IMR-90 (cell line): ENCODE measurements at regions of chr1 and their contacts with region 1.

Region 1: GRCh38 chr1:6906783-6907182 is 121.5 kb downstream of the CAMTA1 start:
- DNase-seq: no peak
- ATAC-seq: no peak
- H3K4me3 ChIP-seq: no peak overlapping the region
- H3K27ac ChIP-seq: no peak overlapping the region
- H3K4me1 ChIP-seq: no peaks in the 10 kb centered on the region
- H3K27me3 ChIP-seq: peaks cover 1% of the 10 kb centered on the region; the same call in 1 of the 2 replicates
- CTCF ChIP-seq: no peak
- POLR2A ChIP-seq: no peak
- RAD21 ChIP-seq: no peak

Region 2: DNA sequence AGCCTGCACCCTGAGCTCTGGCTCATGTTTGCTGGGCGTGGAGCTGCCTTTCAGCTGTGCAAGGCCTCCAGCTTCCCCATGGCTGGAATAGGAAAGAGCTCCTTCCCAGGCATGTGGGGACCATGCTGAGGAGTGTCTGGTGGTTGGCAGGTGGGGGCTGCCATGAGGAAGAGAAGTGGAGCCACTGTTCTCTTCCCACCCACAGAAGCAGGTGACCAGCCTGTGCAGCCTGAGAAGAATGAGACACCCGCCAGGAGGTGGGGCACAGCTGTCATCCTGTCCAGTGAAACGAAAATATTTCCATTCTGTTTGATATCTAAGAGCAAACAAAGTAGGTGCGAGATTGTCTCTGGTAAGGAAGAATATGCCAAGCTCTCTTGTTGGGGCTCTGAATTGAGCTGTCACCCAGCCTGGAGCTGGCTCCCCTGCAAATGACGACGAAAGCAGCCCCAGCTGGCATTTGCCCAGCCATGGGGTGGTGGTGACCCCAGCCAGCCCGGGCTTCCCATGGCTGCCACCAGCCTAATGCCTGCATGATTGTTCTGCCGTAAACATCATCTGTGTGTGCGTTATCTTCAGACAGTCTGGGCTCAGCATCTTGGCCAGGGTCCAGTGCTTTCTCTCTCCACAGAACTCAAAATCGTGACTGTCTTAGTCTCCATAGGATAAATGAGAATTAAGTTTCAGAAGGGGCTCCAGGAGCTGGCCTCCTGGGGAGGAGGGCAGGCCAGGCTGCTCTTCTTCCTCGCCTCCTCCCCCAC is 434.5 kb after region 1 on chr1:
- CTCF ChIA-PET with region 1: no interaction called
- POLR2A ChIA-PET with region 1: no interaction called
- dilution Hi-C with region 1: no loop called
- in situ Hi-C with region 1: no loop called
- intact Hi-C with region 1: loop called (anchors 10 kb)
- DNase-seq: peak; percentile 77
- ATAC-seq: peak; percentile 78
- H3K4me3 ChIP-seq: no peak overlapping the region
- H3K27ac ChIP-seq: no peak overlapping the region
- H3K4me1 ChIP-seq: peaks cover 6% of the 10 kb centered on the region
- H3K27me3 ChIP-seq: no peaks in the 10 kb centered on the region
- CTCF ChIP-seq: no peak
- POLR2A ChIP-seq: no peak
- RAD21 ChIP-seq: no peak